ENCODE measurements at regions of chr15 and their contacts with region 1.

Region 1: GRCh38 chr15:94230956-94231722 is at the start of gene MCTP2:
- DNase-seq: peak; percentile 59 to 92 (median 78)
- ATAC-seq: peak; percentile 83
- H3K4me3 ChIP-seq: peak within 1 kb of the TSS; percentile 75
- H3K4me3 Mint-ChIP-seq: peak within 1 kb of the TSS; percentile 96
- H3K27ac ChIP-seq: peak within 1 kb of the TSS; percentile 53 to 89
- H3K27ac Mint-ChIP-seq: peak within 1 kb of the TSS; percentile 90
- H3K4me1 ChIP-seq: peaks cover 27% of the 10 kb centered on the region
- H3K4me1 Mint-ChIP-seq: peaks cover 45% of the 10 kb centered on the region
- H3K27me3 ChIP-seq: no peaks in the 10 kb centered on the region
- H3K27me3 Mint-ChIP-seq: no peaks in the 10 kb centered on the region
- CTCF ChIP-seq: no peak
- total RNA-seq, gene MCTP2: 8.0 to 10.8 TPM

Region 2: GRCh38 chr15:93072411-93073394 is 1158.4 kb before region 1 on chr15:
- CTCF ChIA-PET with region 1: no interaction called
- POLR2A ChIA-PET with region 1: no interaction called
- intact Hi-C with region 1: no loop called
- DNase-seq: no peak
- ATAC-seq: no peak
- H3K4me3 ChIP-seq: no peak overlapping the region
- H3K4me3 Mint-ChIP-seq: no peak overlapping the region
- H3K27ac ChIP-seq: no peak overlapping the region
- H3K27ac Mint-ChIP-seq: no peak overlapping the region
- H3K4me1 ChIP-seq: peaks cover 15% of the 10 kb centered on the region
- H3K4me1 Mint-ChIP-seq: peaks cover 5% of the 10 kb centered on the region
- H3K27me3 ChIP-seq: peaks cover 43 to 53% of the 10 kb centered on the region in 2 experiments
- H3K27me3 Mint-ChIP-seq: peaks cover 80% of the 10 kb centered on the region
- CTCF ChIP-seq: no peak

Region 3: DNA sequence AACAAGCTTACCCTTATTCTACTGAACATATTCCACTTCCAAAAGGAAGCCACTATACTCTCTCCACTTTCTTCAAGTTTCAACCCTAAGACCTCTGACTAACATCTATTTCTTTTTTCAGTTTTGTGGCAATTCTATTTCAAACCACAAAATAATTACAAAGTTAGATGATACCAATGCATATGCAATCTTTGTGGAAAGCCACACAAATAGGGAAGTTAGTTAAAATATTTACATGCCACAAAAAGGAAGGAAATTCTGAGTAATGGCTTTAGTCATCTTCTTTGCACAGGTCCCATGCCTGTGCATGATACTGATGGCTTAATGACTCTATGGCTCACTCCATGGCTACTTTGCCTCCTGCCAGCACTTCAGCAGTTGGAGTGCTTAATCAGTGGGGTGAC is 56.7 kb before region 1 on chr15:
- CTCF ChIA-PET with region 1: no interaction called
- POLR2A ChIA-PET with region 1: no interaction called
- intact Hi-C with region 1: loop called in 1 of 2 experiments (anchors 5 kb)
- DNase-seq: peak in 3 of 14 experiments; percentile 28 to 66 (median 56)
- ATAC-seq: no peak
- H3K4me3 ChIP-seq: no peak overlapping the region
- H3K4me3 Mint-ChIP-seq: no peak overlapping the region
- H3K27ac ChIP-seq: no peak overlapping the region
- H3K27ac Mint-ChIP-seq: no peak overlapping the region
- H3K4me1 ChIP-seq: no peaks in the 10 kb centered on the region
- H3K4me1 Mint-ChIP-seq: no peaks in the 10 kb centered on the region
- H3K27me3 ChIP-seq: no peaks in the 10 kb centered on the region
- H3K27me3 Mint-ChIP-seq: no peaks in the 10 kb centered on the region
- CTCF ChIP-seq: no peak

Region 4: DNA sequence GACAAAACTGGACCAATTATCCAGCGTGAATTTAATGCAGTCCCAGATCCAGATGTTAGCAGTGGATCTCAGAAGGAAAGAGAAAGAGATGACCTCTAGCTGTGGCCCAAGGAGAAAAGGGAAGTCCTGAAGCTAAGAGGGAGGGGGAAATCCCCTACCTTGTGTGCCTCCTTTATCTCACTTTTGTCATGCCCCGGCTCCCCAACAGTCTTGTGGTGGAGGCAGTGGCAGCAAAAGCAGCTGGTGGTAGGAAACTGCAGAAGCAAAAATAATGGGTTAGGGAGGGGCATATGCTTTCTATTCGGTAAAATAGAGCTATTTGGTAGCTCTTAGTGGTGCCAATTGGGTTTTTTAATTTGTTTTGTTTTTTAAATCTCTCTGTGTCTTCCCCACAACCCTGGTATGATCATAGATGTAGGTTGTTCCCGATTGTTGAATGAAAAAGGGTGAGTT is 56.7 kb after region 1 on chr15:
- CTCF ChIA-PET with region 1: interaction called, 6 read pairs
- POLR2A ChIA-PET with region 1: interaction called, 23 read pairs
- intact Hi-C with region 1: no loop called
- DNase-seq: peak in 5 of 14 experiments; percentile 13 to 76 (median 64)
- ATAC-seq: peak; percentile 61
- H3K4me3 ChIP-seq: no peak overlapping the region
- H3K4me3 Mint-ChIP-seq: no peak overlapping the region
- H3K27ac ChIP-seq: no peak overlapping the region
- H3K27ac Mint-ChIP-seq: no peak overlapping the region
- H3K4me1 ChIP-seq: peaks cover 10% of the 10 kb centered on the region
- H3K4me1 Mint-ChIP-seq: peaks cover 26% of the 10 kb centered on the region
- H3K27me3 ChIP-seq: no peaks in the 10 kb centered on the region
- H3K27me3 Mint-ChIP-seq: no peaks in the 10 kb centered on the region
- CTCF ChIP-seq: no peak

Measured in CD4-positive, alpha-beta T cell (primary cell).